ENCODE measurements at regions of chr1 and their contacts with region 1.

Region 1: DNA sequence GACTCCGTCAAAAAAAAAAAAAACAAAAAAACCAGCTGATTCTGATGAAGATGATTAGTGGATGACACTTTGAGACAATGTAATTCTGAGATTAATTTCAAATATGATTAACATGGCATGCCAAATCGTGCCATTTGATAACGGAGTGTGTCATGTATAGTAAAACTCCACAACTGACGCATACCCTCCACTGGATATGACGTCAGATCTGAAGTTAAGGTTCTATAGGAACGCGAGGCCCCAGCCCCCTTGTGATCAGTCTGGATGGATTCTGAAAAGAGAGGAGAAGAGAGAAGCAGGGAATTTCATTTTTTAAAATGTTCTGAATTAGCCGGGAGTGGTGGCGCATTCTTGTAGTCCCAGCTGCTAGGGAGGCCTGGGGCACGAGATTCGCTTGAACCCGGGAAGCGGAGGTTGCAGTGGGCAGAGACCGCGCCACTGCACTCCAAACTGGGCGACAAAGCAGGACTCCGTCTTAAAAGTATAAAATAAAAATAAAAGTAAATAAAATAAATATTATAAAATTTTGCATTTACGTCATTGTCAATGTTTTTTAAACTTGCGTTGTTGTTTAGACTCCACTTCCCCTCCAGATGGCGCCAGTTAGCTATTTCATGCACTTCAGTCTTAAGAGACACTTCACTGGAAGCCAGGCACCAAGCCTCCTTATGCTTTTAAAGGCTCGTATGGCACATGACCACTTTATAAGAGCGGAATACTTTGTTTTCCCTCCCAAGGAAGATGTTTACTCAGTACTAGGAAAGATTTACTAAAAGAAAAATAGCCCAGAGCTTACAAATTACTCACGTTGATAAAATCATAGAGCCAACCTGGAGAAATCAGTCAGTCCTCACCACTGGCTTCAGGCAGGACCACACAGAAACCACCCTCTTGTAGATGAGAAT is 65.5 kb downstream of the UBE2U start:
- DNase-seq: peak; percentile 63 to 68
- H3K4me3 ChIP-seq: no peak overlapping the region
- H3K27ac ChIP-seq: no peak overlapping the region
- H3K4me1 ChIP-seq: 0 out of 2 replicates have a peak, but pooled peaks cover 6% of the 10 kb centered on the region
- H3K27me3 ChIP-seq: no peaks in the 10 kb centered on the region
- CTCF ChIP-seq: peak; percentile 94

Region 2: GRCh38 chr1:64469977-64470664 is 201.2 kb after region 1 on chr1 and contains the start of gene CACHD1:
- CTCF ChIA-PET with region 1: no interaction called
- POLR2A ChIA-PET with region 1: no interaction called
- intact Hi-C with region 1: loop called (anchors 1 kb)
- DNase-seq: peak in 1 of 2 experiments; percentile 73
- H3K4me3 ChIP-seq: peak within 1 kb of the TSS; percentile 86
- H3K27ac ChIP-seq: no peak within 1 kb of the TSS
- H3K4me1 ChIP-seq: peaks cover 18% of the 10 kb centered on the region
- H3K27me3 ChIP-seq: no peaks in the 10 kb centered on the region; the same call in 1 of the 2 replicates
- CTCF ChIP-seq: no peak
- total RNA-seq, gene CACHD1: 3.1 and 3.8 TPM in 2 replicates

Region 3: GRCh38 chr1:64487061-64487460 is 218.2 kb after region 1 on chr1:
- CTCF ChIA-PET with region 1: no interaction called
- POLR2A ChIA-PET with region 1: no interaction called
- intact Hi-C with region 1: loop called (anchors 1 kb)
- DNase-seq: no peak
- H3K4me3 ChIP-seq: no peak overlapping the region
- H3K27ac ChIP-seq: no peak overlapping the region
- H3K4me1 ChIP-seq: no peaks in the 10 kb centered on the region
- H3K27me3 ChIP-seq: no peaks in the 10 kb centered on the region
- CTCF ChIP-seq: no peak

Region 4: DNA sequence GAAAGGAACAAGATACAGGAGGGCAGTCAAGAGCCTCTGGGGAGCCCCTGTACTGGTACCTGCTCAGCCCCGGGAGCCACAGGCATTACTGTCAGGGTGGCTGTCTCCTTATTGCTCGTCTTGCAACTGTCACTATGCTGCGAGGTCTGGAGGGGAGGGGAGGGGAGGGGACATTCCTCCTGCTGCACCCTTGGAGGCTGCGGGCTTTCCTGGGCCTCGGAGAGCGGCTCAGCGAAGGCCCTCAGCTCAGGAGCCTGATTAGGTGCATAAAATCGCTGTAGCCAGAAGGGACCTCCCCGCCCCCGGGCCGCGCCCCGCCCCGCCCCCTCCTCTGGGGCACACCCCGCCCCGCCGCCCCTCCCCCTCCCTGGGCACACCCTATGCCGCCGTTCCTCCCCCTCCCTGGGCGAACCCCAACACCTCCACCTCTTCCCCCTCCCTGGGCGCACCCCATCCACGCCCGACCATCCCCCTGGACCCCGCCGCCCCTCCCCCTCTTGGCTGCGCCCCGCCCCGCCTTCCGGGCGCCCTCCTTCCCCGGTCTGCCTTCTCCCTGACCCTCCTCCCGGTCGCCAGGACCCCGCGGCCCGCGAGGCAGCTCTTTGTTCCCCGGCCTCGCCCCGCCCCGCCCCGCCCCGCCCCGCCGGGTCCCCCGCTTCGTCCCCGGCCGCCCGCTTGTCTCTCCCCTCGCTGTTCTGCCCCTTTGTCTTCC is 236.5 kb after region 1 on chr1:
- CTCF ChIA-PET with region 1: interaction called, 7 read pairs
- POLR2A ChIA-PET with region 1: no interaction called
- intact Hi-C with region 1: loop called (anchors 1 kb)
- DNase-seq: peak in 1 of 2 experiments; percentile 58
- H3K4me3 ChIP-seq: peak overlapping the region; percentile 58
- H3K27ac ChIP-seq: no peak overlapping the region
- H3K4me1 ChIP-seq: peaks cover 14% of the 10 kb centered on the region
- H3K27me3 ChIP-seq: no peaks in the 10 kb centered on the region
- CTCF ChIP-seq: no peak

Region 5: DNA sequence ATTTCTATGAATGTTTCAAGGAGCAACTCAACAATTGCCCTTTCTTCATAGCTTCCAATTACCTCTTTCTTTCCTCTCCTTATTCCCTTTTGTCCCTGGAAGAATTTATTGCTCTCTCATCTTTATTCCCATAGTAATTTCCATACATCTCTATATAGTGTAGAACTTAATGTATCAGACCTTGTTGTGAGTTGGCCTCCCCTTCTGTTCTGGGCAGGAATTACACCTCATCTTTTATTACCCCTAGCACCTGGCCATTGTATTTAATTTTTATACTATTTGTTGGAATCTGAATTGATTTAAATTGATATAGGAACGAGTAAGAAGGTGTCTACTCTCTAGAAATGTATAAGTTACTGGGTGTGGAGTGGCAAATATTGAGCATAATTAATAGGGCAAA is 315.6 kb after region 1 on chr1:
- CTCF ChIA-PET with region 1: no interaction called
- POLR2A ChIA-PET with region 1: no interaction called
- intact Hi-C with region 1: loop called (anchors 10 kb)
- DNase-seq: no peak
- H3K4me3 ChIP-seq: no peak overlapping the region
- H3K27ac ChIP-seq: no peak overlapping the region
- H3K4me1 ChIP-seq: no peaks in the 10 kb centered on the region
- H3K27me3 ChIP-seq: no peaks in the 10 kb centered on the region
- CTCF ChIP-seq: peak; percentile 39; the same call in 1 of the 2 replicates

Region 6: DNA sequence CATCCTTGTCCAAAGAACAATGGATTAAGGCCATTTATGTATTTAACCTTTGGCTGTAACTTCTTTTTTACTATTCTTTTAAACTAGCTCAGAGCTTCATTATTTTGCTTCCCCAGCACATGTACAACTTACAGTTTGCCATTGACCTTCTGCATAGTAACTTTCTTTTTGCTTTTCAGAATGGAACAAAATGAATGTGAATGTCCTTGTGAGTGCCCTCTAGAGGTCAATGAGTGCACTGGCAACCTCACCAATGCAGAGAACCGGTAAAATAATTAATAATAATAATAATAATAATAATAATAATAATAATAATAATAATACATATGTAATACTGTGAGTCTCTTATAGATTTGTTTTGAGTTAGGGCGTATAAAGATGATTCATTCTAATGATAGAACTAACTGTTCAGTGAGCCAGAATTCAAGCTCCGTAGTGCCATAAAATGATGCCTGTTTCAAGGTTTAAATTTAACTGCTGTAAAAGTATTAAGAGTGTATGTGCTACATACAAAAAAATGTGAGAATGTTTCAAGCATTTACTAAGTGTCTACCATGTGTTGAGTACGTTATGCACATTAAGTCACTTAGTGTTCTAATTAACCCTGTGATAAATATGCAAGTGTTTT is 406.9 kb after region 1 on chr1:
- CTCF ChIA-PET with region 1: no interaction called
- POLR2A ChIA-PET with region 1: no interaction called
- intact Hi-C with region 1: loop called (anchors 1 kb)
- DNase-seq: no peak
- H3K4me3 ChIP-seq: no peak overlapping the region
- H3K27ac ChIP-seq: no peak overlapping the region
- H3K4me1 ChIP-seq: no peaks in the 10 kb centered on the region
- H3K27me3 ChIP-seq: no peaks in the 10 kb centered on the region
- CTCF ChIP-seq: peak; percentile 65

Region 7: DNA sequence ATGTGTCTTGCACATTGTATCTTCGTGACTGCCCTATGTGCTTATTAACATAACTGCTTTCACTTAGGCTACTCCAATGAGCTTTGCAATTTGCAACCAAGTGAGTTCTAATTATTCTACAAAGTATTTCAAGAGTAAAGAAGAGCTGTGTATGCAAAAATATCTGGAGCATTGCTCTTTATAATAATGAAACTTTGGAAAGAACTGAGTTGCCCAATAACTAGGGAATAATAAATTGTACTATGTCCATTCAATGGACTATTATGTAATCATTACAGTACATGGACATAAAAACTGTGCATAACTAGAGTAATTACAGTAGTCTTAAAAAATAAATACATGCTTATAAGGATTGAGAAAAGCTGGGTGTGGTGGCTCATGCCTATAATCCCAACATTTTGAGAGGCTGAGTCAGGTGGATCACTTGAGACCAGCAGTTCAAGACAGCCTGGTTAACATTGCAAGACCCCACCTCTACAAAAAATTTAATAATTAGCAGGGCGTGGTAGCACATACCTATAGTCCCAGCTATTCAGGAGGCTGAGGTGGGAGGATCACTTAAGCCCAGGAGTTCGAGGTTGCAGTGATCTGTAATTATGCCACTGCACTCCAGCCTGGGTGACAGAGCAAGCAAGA is 767.8 kb after region 1 on chr1:
- CTCF ChIA-PET with region 1: no interaction called
- POLR2A ChIA-PET with region 1: no interaction called
- intact Hi-C with region 1: loop called (anchors 10 kb)
- DNase-seq: peak in 1 of 2 experiments; percentile 69
- H3K4me3 ChIP-seq: no peak overlapping the region
- H3K27ac ChIP-seq: no peak overlapping the region
- H3K4me1 ChIP-seq: no peaks in the 10 kb centered on the region
- H3K27me3 ChIP-seq: no peaks in the 10 kb centered on the region
- CTCF ChIP-seq: no peak